A549 (cell line): ENCODE measurements at regions of chr5 and their contacts with region 1.

Region 1: GRCh38 chr5:93800988-93801811 is 59.8 kb upstream of the POU5F2 start:
- DNase-seq: peak in 1 of 2 experiments; percentile 60
- ATAC-seq: peak; percentile 56 to 80; a peak in 5 of 6 replicates
- H3K4me3 ChIP-seq: no peak overlapping the region; the same call in 2 of the 3 replicates
- H3K27ac ChIP-seq: 0 out of 6 replicates have a peak overlapping the region, but pooled peaks of 1 of the 2 experiments have one; percentile 11
- H3K4me1 ChIP-seq: peaks cover 12% of the 10 kb centered on the region
- CTCF ChIP-seq: peak; percentile 93
- EP300 ChIP-seq: no peak
- POLR2A ChIP-seq: no peak
- RAD21 ChIP-seq: peak; percentile 87 to 90

Region 2: DNA sequence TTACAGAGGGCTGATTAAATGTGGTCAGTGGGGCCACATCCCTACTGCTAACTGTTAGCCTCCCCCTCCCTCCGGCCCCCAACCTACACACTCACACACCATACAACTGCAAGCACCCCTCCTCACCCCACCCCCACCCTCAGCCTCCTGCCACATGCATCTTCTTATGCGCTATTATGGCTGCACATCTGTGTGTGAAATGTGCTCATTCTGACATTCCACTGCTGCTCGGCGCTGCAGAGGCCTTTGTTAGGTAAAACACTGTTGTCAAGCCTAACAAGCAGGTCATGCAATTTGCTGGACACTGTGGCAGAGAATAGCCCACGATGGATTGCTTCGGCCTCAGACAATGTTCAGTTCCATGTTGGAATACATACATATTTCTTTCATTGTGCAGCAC is 393.7 kb before region 1 on chr5:
- CTCF ChIA-PET with region 1: no interaction called
- POLR2A ChIA-PET with region 1: no interaction called
- DNase-seq: no peak
- ATAC-seq: no peak
- H3K4me3 ChIP-seq: no peak overlapping the region
- H3K27ac ChIP-seq: no peak overlapping the region
- H3K4me1 ChIP-seq: no peaks in the 10 kb centered on the region
- CTCF ChIP-seq: no peak
- EP300 ChIP-seq: no peak
- POLR2A ChIP-seq: no peak
- RAD21 ChIP-seq: no peak

Region 3: DNA sequence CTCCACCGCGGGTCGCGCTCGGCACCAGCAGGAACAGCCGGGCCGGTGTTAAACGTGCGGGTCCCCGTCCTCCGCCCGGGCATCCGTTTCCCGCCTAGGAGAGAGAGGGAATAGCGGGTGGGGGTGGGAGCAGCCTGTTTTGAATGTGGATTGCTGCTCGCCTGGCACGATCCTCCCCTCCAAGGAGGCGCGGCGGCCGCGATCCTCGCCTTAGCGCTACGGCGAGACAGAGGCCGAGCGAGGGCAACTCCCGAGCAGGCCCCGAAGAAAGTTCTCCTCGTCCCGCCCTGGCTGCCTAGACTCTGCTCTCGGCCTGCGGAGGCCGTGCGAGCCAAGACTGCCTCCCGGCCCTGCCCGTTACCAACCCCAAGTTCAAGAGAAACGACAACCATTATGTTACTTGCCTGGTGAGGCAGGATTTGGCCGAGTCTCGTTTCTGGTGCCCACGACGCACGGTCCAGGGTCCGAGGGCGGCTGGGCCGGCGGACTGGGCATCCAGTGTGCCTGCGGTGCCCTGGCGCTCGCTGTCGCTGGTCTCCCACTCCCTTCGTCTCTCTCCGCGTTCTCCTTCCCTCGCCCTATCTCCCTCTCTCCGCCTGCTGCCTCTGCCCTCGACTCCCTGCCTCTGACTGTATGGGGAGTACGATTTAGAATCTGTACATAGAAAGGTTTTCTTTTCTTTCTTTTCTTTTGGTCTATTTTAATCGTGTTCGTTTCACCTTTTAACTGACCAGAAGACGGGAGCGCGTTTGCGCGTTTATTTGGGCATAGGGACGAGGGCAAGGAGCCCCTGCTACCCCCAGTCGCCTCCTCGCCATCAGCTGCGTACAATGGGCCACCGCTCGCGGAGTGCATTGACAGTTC is 220.9 kb before region 1 on chr5:
- CTCF ChIA-PET with region 1: interaction called, 14 read pairs
- POLR2A ChIA-PET with region 1: no interaction called
- DNase-seq: peak in 1 of 2 experiments; percentile 28
- ATAC-seq: peak; percentile 8 to 56
- H3K4me3 ChIP-seq: peak overlapping the region; percentile 78
- H3K27ac ChIP-seq: peak overlapping the region; percentile 63 to 94
- H3K4me1 ChIP-seq: peaks cover 4% of the 10 kb centered on the region; the same call in 1 of the 3 replicates
- CTCF ChIP-seq: no peak
- EP300 ChIP-seq: no peak
- POLR2A ChIP-seq: no peak; the same call in none of the 2 replicates
- RAD21 ChIP-seq: 0 out of 5 replicates have a peak, but pooled peaks of 1 of the 2 experiments have one; percentile 15

Region 4: DNA sequence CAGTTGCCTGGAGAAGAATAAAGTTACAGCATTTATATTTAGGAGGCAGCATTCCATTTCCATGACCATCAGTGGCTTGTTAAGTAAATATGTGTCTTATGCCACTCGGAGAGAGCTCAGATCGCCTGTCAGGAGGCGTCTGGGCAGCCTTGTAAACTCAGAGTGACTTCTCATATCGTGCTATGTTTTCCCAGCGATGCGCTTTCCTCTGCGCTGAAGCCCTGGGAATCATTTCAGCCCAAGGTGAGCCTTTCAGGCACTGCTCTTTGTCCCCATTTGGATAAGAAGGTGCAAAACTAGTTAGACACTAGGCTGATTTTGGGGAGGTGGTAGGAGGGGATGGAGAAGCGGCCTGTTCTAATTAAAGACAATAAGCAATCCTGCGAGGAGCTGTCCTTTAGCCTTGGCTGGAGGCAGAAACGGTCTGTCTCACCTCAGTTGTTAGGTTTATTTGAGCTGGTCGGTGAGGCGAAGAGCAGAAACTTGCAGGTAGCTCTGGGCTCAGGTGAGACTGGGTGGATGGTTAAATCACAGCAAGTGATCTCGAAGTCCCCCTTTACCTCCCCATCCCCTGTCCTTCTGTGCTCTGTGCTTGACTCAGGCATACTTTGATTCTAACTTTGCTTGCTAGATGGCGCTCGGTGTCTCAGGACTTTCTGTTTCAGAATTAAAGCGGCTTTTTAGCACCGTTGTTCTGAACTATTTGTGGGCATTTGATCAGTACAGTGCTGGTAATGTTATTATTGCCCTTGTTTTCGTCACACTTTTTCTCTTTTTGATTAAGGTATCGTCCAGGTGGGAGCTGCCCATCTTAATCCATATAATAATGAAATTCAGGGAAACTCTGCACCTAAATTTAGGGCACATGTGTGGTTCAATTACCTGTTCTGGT is 193.6 kb before region 1 on chr5:
- CTCF ChIA-PET with region 1: interaction called, 25 read pairs
- POLR2A ChIA-PET with region 1: no interaction called
- DNase-seq: peak; percentile 42 to 57
- ATAC-seq: peak; percentile 72 to 86
- H3K4me3 ChIP-seq: peak overlapping the region; percentile 7; the same call in 2 of the 3 replicates
- H3K27ac ChIP-seq: no peak overlapping the region
- H3K4me1 ChIP-seq: peaks cover 15% of the 10 kb centered on the region; the same call in 2 of the 3 replicates
- CTCF ChIP-seq: peak; percentile 76
- EP300 ChIP-seq: no peak
- POLR2A ChIP-seq: no peak
- RAD21 ChIP-seq: peak; percentile 75 to 77

Region 5: GRCh38 chr5:93620487-93621326 is 180.5 kb before region 1 on chr5:
- CTCF ChIA-PET with region 1: interaction called, 10 read pairs
- POLR2A ChIA-PET with region 1: no interaction called
- DNase-seq: peak; percentile 47 to 80
- ATAC-seq: peak; percentile 87 to 92
- H3K4me3 ChIP-seq: peak overlapping the region; percentile 87
- H3K27ac ChIP-seq: peak overlapping the region; percentile 78 to 94
- H3K4me1 ChIP-seq: peaks cover 15% of the 10 kb centered on the region
- CTCF ChIP-seq: peak; percentile 30; the same call in 1 of the 3 replicates
- EP300 ChIP-seq: no peak
- POLR2A ChIP-seq: peak; percentile 26; the same call in 1 of the 2 replicates
- RAD21 ChIP-seq: peak in 1 of 2 experiments; percentile 42; a peak in 2 of 5 replicates

Region 6: GRCh38 chr5:93782978-93783377 is 18.2 kb before region 1 on chr5:
- CTCF ChIA-PET with region 1: interaction called, 14 read pairs
- POLR2A ChIA-PET with region 1: no interaction called
- DNase-seq: no peak
- ATAC-seq: no peak
- H3K4me3 ChIP-seq: no peak overlapping the region
- H3K27ac ChIP-seq: no peak overlapping the region
- H3K4me1 ChIP-seq: no peaks in the 10 kb centered on the region
- CTCF ChIP-seq: no peak
- EP300 ChIP-seq: no peak
- POLR2A ChIP-seq: no peak
- RAD21 ChIP-seq: no peak

Region 7: DNA sequence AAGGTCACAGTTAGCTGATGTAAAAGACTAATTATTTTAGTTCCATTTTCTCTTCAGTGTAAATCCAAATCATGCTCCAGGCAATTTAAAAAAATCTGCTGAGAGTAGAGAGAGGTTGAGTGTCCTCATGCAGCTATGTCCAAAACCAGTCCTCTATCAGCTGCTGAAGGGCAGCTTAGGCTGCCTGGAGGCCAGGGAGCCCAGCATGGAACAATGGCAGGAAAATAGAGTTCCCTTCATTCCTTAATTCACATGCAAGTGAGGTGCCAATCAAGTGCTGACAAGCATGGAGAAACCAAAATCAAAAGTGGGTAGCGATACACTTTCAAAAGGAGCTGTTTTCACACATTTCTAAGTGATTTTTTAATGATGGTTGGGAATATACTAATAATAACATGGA is 18.5 kb after region 1 on chr5:
- CTCF ChIA-PET with region 1: interaction called, 14 read pairs
- POLR2A ChIA-PET with region 1: no interaction called
- DNase-seq: no peak
- ATAC-seq: no peak
- H3K4me3 ChIP-seq: no peak overlapping the region
- H3K27ac ChIP-seq: no peak overlapping the region
- H3K4me1 ChIP-seq: no peaks in the 10 kb centered on the region
- CTCF ChIP-seq: no peak
- EP300 ChIP-seq: no peak
- POLR2A ChIP-seq: no peak
- RAD21 ChIP-seq: no peak